Mucosa of descending colon (tissue), 3 donors: ENCODE measurements at regions of chr4 and their contacts with region 1.

Region 1: GRCh38 chr4:70993181-70994068 is at the start of gene DCK:
- DNase-seq: peak; percentile 94 to 96 (median 95)
- ATAC-seq: peak; percentile 97
- H3K4me3 ChIP-seq: peak within 1 kb of the TSS; percentile 72
- H3K4me1 ChIP-seq: peaks cover 12% of the 10 kb centered on the region
- CTCF ChIP-seq: no peak
- total RNA-seq, gene DCK: 9.5 to 16.9 (median 11.1) TPM

Region 2: GRCh38 chr4:70829492-70829891 is 163.9 kb before region 1 on chr4:
- intact Hi-C with region 1: loop called in 1 of 2 experiments (anchors 10 kb)
- DNase-seq: no peak
- ATAC-seq: no peak
- H3K4me3 ChIP-seq: no peak overlapping the region
- H3K4me1 ChIP-seq: peaks cover 7% of the 10 kb centered on the region
- CTCF ChIP-seq: no peak